Heart left ventricle (tissue), 16 donors: ENCODE measurements at regions of chr9 and their contacts with region 1.

Region 1: GRCh38 chr9:97689401-97689800 is 7.7 kb downstream of the XPA start:
- DNase-seq: no peak
- ATAC-seq: no peak
- H3K4me3 ChIP-seq: no peak overlapping the region
- H3K27ac ChIP-seq: no peak overlapping the region
- H3K4me1 ChIP-seq: peaks cover 0 to 25% (median 10%) of the 10 kb centered on the region in 12 donors
- H3K27me3 ChIP-seq: no peaks in the 10 kb centered on the region
- CTCF ChIP-seq: no peak
- POLR2A ChIP-seq: no peak

Region 2: GRCh38 chr9:97632985-97633858 is 56.2 kb before region 1 on chr9 and contains the starts of genes NCBP1 and TSTD2:
- intact Hi-C with region 1: loop called in 2 of 10 experiments (anchors 5 to 10 kb)
- DNase-seq: peak; percentile 97 to 99 (median 98)
- ATAC-seq: peak; percentile 93 to 96 (median 94)
- H3K4me3 ChIP-seq: peak within 1 kb of the TSS; percentile 50 to 98 (median 76)
- H3K27ac ChIP-seq: peak within 1 kb of the TSS; percentile 86 to 98 (median 96)
- H3K4me1 ChIP-seq: peaks cover 6 to 66% (median 48%) of the 10 kb centered on the region in 12 donors
- H3K27me3 ChIP-seq: no peaks in the 10 kb centered on the region
- CTCF ChIP-seq: peak in 4 of 12 donors; percentile 7 to 29 (median 22)
- POLR2A ChIP-seq: peak in 1 of 2 donors; percentile 60
- total RNA-seq, gene NCBP1: 13.9 to 22.4 (median 19.7) TPM
- total RNA-seq, gene TSTD2: 16.5 to 32.9 (median 22.4) TPM

Region 3: DNA sequence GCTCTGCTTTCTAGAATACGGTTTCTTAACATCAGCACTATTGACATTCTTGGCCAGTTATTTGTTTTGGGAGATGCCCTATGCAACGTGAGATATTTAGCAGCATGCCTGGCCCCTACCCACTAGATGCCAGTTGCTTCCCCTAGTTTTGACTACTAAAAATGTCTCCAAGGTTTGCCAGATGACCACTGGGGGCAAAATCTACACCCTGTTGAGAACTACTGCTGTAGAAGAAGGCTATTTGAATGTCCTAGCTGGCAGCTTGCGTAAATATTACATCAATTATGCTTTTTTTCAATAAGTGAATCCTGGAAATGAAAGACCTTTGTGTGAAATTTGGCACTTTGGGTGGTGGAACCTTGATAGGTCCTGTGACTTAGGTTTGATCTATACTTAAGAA is 50.7 kb before region 1 on chr9:
- intact Hi-C with region 1: loop called in 2 of 10 experiments (anchors 5 to 10 kb)
- DNase-seq: no peak
- ATAC-seq: no peak
- H3K4me3 ChIP-seq: no peak overlapping the region
- H3K27ac ChIP-seq: no peak overlapping the region
- H3K4me1 ChIP-seq: peaks cover 6 to 61% (median 39%) of the 10 kb centered on the region in 12 donors
- H3K27me3 ChIP-seq: no peaks in the 10 kb centered on the region
- CTCF ChIP-seq: peak in 1 of 12 donors; percentile 15
- POLR2A ChIP-seq: no peak

Region 4: DNA sequence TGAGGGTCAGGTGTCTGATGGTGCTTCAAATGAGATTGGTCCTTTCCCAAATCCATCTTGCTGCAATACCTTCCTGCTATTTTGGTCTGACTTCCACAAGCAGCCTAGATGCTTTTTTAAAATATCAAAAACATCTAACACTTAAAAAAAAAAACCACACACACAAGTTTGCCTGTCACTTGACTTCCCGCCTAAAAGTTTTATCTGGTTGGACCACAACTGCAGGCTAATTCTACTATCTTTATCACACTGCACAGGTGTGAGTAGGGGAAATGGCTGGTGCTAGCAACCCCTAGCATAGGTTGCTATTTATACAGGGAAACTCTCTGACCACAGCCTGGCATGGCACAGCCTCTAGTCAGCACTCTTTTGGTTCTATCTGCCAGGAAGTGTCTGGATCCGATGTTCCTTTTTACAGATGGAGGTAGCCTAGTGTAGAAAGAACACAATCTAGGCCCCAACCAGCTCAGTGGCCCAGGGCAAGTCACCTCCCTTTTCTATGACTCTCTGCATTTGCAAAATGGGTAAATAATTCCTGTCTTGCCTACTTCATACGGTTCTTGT is 248.8 kb after region 1 on chr9 and contains the start of gene HEMGN:
- intact Hi-C with region 1: no loop called
- DNase-seq: no peak
- ATAC-seq: no peak
- H3K4me3 ChIP-seq: no peak within 1 kb of the TSS
- H3K27ac ChIP-seq: peak within 1 kb of the TSS in 1 of 12 donors; percentile 24
- H3K4me1 ChIP-seq: peaks cover 0 to 11% (median 0%) of the 10 kb centered on the region in 12 donors
- H3K27me3 ChIP-seq: peaks cover 0 to 41% (median 0%) of the 10 kb centered on the region in 9 donors
- CTCF ChIP-seq: no peak
- POLR2A ChIP-seq: no peak
- total RNA-seq, gene HEMGN: 0.23 to 0.40 TPM in 2 of 9 donors, not detected in the others